Left cardiac atrium (tissue), 4 donors: ENCODE measurements at regions of chr7 and their contacts with region 1.

Region 1: GRCh38 chr7:73858807-73859206 is 2.2 kb upstream of the TMEM270 start:
- DNase-seq: peak; percentile 4
- ATAC-seq: no peak

Region 2: GRCh38 chr7:73811760-73812168 is 47.0 kb before region 1 on chr7:
- intact Hi-C with region 1: loop called in 1 of 2 experiments (anchors 5 kb)
- DNase-seq: peak; percentile 50
- ATAC-seq: peak; percentile 84 to 90